Breast epithelium (tissue), 4 donors: ENCODE measurements at regions of chr3 and their contacts with region 1.

Region 1: GRCh38 chr3:133649486-133650068 is 12.2 kb downstream of the TOPBP1 start:
- DNase-seq: no peak
- H3K4me3 ChIP-seq: no peak overlapping the region
- H3K27ac ChIP-seq: no peak overlapping the region
- H3K4me1 ChIP-seq: no peaks in the 10 kb centered on the region
- H3K27me3 ChIP-seq: no peaks in the 10 kb centered on the region
- CTCF ChIP-seq: no peak
- POLR2A ChIP-seq: no peak

Region 2: DNA sequence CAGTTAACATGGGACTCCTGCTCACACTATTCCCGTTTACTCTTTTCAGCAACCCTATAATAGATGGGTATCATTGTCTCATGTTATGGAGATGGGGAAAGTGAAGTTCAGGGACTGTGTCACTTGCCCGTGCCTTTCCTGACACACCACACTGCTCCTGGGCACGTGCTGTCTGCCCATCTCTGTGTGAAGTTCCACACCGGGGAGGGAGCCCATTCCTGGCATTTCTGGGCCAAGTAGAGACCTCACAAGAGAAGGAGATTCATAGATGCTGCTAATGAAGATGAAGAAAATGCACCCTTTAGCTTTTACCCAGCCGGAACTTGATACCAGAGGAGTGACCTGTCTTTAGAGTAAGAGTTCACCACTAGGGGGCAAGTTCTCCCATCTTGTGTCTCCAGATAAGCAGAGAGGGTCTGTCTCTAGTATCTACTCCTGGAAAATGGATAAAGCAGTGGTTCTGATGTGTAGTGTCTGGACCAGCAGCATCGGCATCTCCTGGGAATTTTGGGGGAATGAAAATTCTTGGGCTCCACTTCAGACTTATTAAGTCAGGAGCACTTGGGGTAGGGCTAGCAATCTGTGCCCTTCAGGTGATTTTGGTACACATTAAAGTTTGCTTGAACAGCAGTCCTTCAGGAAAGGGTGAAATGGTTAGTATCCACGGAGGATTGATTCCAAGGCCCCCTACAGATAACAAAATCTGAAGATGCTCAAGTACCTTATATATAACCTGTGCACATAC is 14.2 kb after region 1 on chr3:
- intact Hi-C with region 1: loop called (anchors 1 kb)
- DNase-seq: no peak
- H3K4me3 ChIP-seq: no peak overlapping the region
- H3K27ac ChIP-seq: no peak overlapping the region
- H3K4me1 ChIP-seq: no peaks in the 10 kb centered on the region
- H3K27me3 ChIP-seq: no peaks in the 10 kb centered on the region
- CTCF ChIP-seq: peak in 2 of 3 donors; percentile 24 to 33
- POLR2A ChIP-seq: no peak

Region 3: GRCh38 chr3:133717424-133717823 is 67.8 kb after region 1 on chr3:
- intact Hi-C with region 1: no loop called
- DNase-seq: no peak
- H3K4me3 ChIP-seq: no peak overlapping the region
- H3K27ac ChIP-seq: no peak overlapping the region
- H3K4me1 ChIP-seq: no peaks in the 10 kb centered on the region
- H3K27me3 ChIP-seq: no peaks in the 10 kb centered on the region
- CTCF ChIP-seq: no peak
- POLR2A ChIP-seq: no peak